Activated CD8-positive, alpha-beta memory T cell treated with anti-CD3 and anti-CD28 coated beads, Interleukin-2, amount 10 ng/mL, durations not matched to agents 7 days and 5 days (primary cell): ENCODE measurements at regions of chr2 and their contacts with region 1.

Region 1: DNA sequence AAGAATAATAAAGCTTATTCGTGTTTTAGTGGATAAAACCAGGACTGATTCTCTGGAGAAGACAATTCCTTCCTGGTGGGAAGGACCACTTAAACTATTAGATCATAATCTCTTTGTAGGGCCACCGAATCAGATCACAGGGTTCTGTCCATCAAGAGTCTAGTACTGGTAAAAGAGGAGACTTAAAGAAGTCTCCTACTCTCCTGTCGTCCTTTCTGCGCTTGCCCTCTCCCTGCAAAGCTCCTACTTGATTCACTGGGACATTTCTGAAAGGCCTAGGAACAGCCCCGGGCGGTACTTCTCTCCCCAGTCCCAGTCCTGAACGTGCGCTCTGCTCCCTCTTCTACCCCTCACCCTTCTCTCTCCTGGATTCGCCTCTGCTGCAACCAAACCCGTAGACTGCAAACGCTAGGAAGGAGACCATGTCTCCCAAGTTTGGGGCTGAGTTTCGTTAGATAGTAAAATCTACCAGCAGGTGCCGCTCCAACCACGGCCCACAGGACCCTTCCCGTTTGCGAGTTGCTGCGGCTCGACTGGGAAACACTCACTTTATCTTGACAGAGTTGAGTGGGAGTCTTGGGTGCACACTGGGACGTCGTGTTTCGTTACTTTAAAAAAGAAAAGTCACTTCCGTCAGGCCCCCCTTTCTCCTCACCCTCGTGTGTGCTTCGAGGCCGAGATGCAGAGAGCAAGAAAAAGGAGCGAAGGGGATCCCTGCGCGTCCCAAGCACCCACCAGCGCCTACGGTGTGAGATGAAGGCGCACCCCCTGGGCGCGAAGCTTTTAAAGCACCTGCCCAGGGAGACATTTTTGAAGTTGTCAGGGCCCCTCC is 923 bp downstream of the FIGLA start:
- DNase-seq: peak; percentile 78
- ATAC-seq: peak; percentile 82
- H3K4me3 Mint-ChIP-seq: peak overlapping the region; percentile 56
- H3K27ac Mint-ChIP-seq: no peak overlapping the region
- H3K4me1 Mint-ChIP-seq: peaks cover 7% of the 10 kb centered on the region
- H3K27me3 Mint-ChIP-seq: peaks cover 70% of the 10 kb centered on the region

Region 2: GRCh38 chr2:70656421-70657010 is 133.0 kb before region 1 on chr2:
- CTCF ChIA-PET with region 1: interaction called, 13 read pairs
- DNase-seq: no peak
- ATAC-seq: no peak
- H3K4me3 Mint-ChIP-seq: no peak overlapping the region
- H3K27ac Mint-ChIP-seq: no peak overlapping the region
- H3K4me1 Mint-ChIP-seq: peaks cover 11% of the 10 kb centered on the region
- H3K27me3 Mint-ChIP-seq: peaks cover 49% of the 10 kb centered on the region

Region 3: GRCh38 chr2:70919672-70920366 is 130.3 kb after region 1 on chr2:
- CTCF ChIA-PET with region 1: interaction called, 10 read pairs
- DNase-seq: peak; percentile 79
- ATAC-seq: peak; percentile 51
- H3K4me3 Mint-ChIP-seq: no peak overlapping the region
- H3K27ac Mint-ChIP-seq: no peak overlapping the region
- H3K4me1 Mint-ChIP-seq: no peaks in the 10 kb centered on the region
- H3K27me3 Mint-ChIP-seq: peaks cover 18% of the 10 kb centered on the region